ENCODE measurements at regions of chrX and their contacts with region 1.

Region 1: DNA sequence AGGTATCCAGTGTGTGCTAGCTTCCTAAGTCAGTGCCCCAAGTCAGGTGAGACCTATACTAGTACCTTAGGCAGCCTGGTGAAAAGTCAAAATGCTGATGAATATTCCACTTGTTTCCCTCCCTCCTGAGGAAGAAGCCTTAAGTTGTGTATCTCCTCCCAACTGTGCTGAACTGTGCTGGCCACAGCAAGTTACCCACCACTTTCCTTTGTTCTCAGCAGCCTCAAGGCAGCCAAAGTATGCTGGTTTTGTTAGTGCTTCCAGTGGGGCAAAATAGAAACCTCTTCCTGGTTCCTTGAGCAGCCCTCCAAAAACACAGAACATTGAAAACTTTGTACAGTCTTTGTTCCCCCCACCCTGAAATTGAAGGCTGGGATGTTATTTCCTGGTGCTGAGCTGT is 13.9 kb downstream of the ATG4A start:
- DNase-seq: no peak
- ATAC-seq: no peak
- H3K4me3 ChIP-seq: no peak overlapping the region
- H3K27ac ChIP-seq: no peak overlapping the region
- H3K4me1 ChIP-seq: no peaks in the 10 kb centered on the region
- H3K27me3 ChIP-seq: no peaks in the 10 kb centered on the region
- CTCF ChIP-seq: no peak
- EP300 ChIP-seq: no peak
- POLR2A ChIP-seq: no peak
- RAD21 ChIP-seq: no peak

Region 2: DNA sequence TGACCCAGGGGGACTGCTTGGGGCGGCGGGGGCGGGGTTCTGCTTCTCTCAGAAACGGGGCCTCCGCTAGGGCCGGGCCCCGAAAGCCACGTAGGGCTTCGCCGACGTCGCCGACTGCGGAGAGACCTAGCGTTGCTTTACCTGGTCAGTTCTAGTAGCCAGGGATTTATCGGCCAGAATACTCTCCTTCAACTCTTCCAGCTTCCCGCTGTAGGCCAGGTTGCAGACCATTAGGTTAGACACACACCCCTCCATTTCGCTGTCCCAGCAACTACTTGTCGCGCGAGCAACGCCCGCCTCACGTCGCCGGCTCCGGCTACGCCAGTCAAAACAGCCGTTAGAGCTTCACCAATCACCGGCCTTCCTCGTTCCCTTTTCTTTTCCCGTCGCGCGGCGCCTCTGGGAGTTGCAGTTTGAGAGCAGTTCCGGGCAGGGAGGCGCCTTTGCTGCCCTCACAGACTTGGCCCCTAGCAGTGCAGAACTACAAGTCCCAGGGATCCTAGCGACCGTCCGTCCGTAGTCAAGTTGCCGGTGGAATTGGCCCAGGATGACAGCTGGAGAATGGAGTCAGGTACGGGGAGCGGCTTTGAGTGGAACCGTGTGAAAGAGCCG is 14.1 kb before region 1 on chrX and contains the starts of genes ATG4A and PSMD10:
- CTCF ChIA-PET with region 1: no interaction called
- POLR2A ChIA-PET with region 1: interaction called, 11 read pairs
- RAD21 ChIA-PET with region 1: no interaction called
- SMC1A ChIA-PET with region 1: no interaction called
- in situ Hi-C with region 1: no loop called
- intact Hi-C with region 1: no loop called
- DNase-seq: peak; percentile 71
- ATAC-seq: peak; percentile 97
- H3K4me3 ChIP-seq: peak within 1 kb of the TSS; percentile 78
- H3K27ac ChIP-seq: peak within 1 kb of the TSS; percentile 66
- H3K4me1 ChIP-seq: no peaks in the 10 kb centered on the region
- H3K27me3 ChIP-seq: no peaks in the 10 kb centered on the region
- CTCF ChIP-seq: no peak
- EP300 ChIP-seq: no peak
- POLR2A ChIP-seq: peak; percentile 84
- RAD21 ChIP-seq: no peak
- polyA plus RNA-seq, gene ATG4A: 14.7 to 15.0 TPM
- polyA plus RNA-seq, gene PSMD10: 95.4 to 152 TPM

Measured in GM12878 (cell line).